ENCODE measurements at regions of chr12 and their contacts with region 1.

Region 1: GRCh38 chr12:92145731-92146496 is at the start of gene BTG1:
- DNase-seq: peak; percentile 100
- ATAC-seq: peak; percentile 76
- H3K4me3 ChIP-seq: peak within 1 kb of the TSS; percentile 94 to 100 (median 96)
- H3K4me3 Mint-ChIP-seq: peak within 1 kb of the TSS; percentile 98
- H3K27ac ChIP-seq: peak within 1 kb of the TSS; percentile 87 to 91
- H3K27ac Mint-ChIP-seq: peak within 1 kb of the TSS; percentile 99
- H3K4me1 ChIP-seq: peaks cover 24 to 27% of the 10 kb centered on the region in 2 donors
- H3K4me1 Mint-ChIP-seq: peaks cover 31% of the 10 kb centered on the region
- H3K27me3 ChIP-seq: no peaks in the 10 kb centered on the region
- H3K27me3 Mint-ChIP-seq: no peaks in the 10 kb centered on the region
- CTCF ChIP-seq: no peak
- total RNA-seq, gene BTG1: 733 and 790 TPM in 2 replicates

Region 2: GRCh38 chr12:91811481-91812287 is 334.2 kb before region 1 on chr12:
- CTCF ChIA-PET with region 1: interaction called, 33 read pairs
- POLR2A ChIA-PET with region 1: no interaction called
- intact Hi-C with region 1: loop called (anchors 2 kb)
- DNase-seq: peak; percentile 80
- ATAC-seq: peak; percentile 71
- H3K4me3 ChIP-seq: no peak overlapping the region
- H3K4me3 Mint-ChIP-seq: no peak overlapping the region
- H3K27ac ChIP-seq: no peak overlapping the region
- H3K27ac Mint-ChIP-seq: peak overlapping the region; percentile 43
- H3K4me1 ChIP-seq: peaks cover 0 to 5% of the 10 kb centered on the region in 2 donors
- H3K4me1 Mint-ChIP-seq: peaks cover 4% of the 10 kb centered on the region
- H3K27me3 ChIP-seq: no peaks in the 10 kb centered on the region
- H3K27me3 Mint-ChIP-seq: no peaks in the 10 kb centered on the region
- CTCF ChIP-seq: peak; percentile 90

Region 3: GRCh38 chr12:92078167-92079053 is 67.5 kb before region 1 on chr12:
- CTCF ChIA-PET with region 1: no interaction called
- POLR2A ChIA-PET with region 1: no interaction called
- intact Hi-C with region 1: no loop called
- DNase-seq: no peak
- ATAC-seq: no peak
- H3K4me3 ChIP-seq: no peak overlapping the region
- H3K4me3 Mint-ChIP-seq: no peak overlapping the region
- H3K27ac ChIP-seq: no peak overlapping the region
- H3K27ac Mint-ChIP-seq: no peak overlapping the region
- H3K4me1 ChIP-seq: peaks cover 17 to 20% of the 10 kb centered on the region in 2 donors
- H3K4me1 Mint-ChIP-seq: peaks cover 45% of the 10 kb centered on the region
- H3K27me3 ChIP-seq: no peaks in the 10 kb centered on the region
- H3K27me3 Mint-ChIP-seq: no peaks in the 10 kb centered on the region
- CTCF ChIP-seq: no peak

Region 4: DNA sequence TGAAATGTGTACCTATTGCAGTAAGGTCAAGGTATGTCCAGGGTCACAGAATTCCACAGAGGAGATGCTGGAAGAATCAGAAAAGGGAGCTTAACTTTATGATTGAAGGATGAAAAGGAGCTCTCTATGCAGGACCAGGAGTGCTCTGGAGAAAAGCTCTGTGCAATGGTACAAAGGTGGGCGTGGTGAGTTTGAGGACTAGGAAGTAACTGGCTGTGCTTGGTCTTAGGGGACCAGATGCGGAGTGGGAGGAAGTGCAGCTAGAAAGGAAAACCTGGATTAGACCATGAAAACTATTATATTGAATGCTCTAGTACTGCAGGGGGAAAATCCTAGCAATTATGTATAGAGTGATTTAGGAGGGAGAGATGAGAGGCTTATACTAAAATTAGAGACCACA is 57.1 kb before region 1 on chr12:
- CTCF ChIA-PET with region 1: no interaction called
- POLR2A ChIA-PET with region 1: no interaction called
- intact Hi-C with region 1: no loop called
- DNase-seq: no peak
- ATAC-seq: no peak
- H3K4me3 ChIP-seq: no peak overlapping the region
- H3K4me3 Mint-ChIP-seq: no peak overlapping the region
- H3K27ac ChIP-seq: no peak overlapping the region
- H3K27ac Mint-ChIP-seq: no peak overlapping the region
- H3K4me1 ChIP-seq: no peaks in the 10 kb centered on the region
- H3K4me1 Mint-ChIP-seq: peaks cover 16% of the 10 kb centered on the region
- H3K27me3 ChIP-seq: no peaks in the 10 kb centered on the region
- H3K27me3 Mint-ChIP-seq: no peaks in the 10 kb centered on the region
- CTCF ChIP-seq: no peak

Region 5: GRCh38 chr12:92158796-92159439 is 13.0 kb after region 1 on chr12:
- CTCF ChIA-PET with region 1: interaction called, 4 read pairs
- POLR2A ChIA-PET with region 1: interaction called, 16 read pairs
- intact Hi-C with region 1: loop called (anchors 1 kb)
- DNase-seq: peak; percentile 67
- ATAC-seq: peak; percentile 69
- H3K4me3 ChIP-seq: peak overlapping the region; percentile 9 to 55 (median 41)
- H3K4me3 Mint-ChIP-seq: peak overlapping the region; percentile 81
- H3K27ac ChIP-seq: peak overlapping the region; percentile 87 to 89
- H3K27ac Mint-ChIP-seq: peak overlapping the region; percentile 88
- H3K4me1 ChIP-seq: peaks cover 79 to 82% of the 10 kb centered on the region in 2 donors
- H3K4me1 Mint-ChIP-seq: peaks cover 87% of the 10 kb centered on the region
- H3K27me3 ChIP-seq: no peaks in the 10 kb centered on the region
- H3K27me3 Mint-ChIP-seq: no peaks in the 10 kb centered on the region
- CTCF ChIP-seq: no peak

Region 6: DNA sequence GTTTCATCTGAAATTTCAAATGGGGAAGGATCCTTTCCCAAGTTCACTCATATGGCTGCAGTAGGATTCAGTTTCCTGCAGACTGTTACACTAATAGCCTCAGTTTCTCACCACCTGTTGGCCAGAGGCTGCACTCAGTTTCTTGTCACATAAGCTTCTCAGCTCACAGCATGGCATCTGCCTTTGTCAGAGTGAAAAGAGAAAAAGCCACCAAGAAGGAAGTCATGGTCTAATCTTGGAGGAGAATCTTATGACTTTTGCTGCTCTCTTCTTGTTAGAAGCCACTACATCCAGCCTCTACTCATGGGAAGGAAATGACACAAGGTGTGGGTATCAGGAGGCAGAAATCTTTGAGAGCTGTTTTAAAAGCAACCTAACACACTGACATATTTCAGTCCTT is 39.1 kb after region 1 on chr12:
- CTCF ChIA-PET with region 1: no interaction called
- POLR2A ChIA-PET with region 1: interaction called, 3 read pairs
- intact Hi-C with region 1: loop called (anchors 5 kb)
- DNase-seq: peak; percentile 43
- ATAC-seq: peak; percentile 37
- H3K4me3 ChIP-seq: peak overlapping the region in 1 of 5 experiments; percentile 31
- H3K4me3 Mint-ChIP-seq: peak overlapping the region; percentile 62
- H3K27ac ChIP-seq: peak overlapping the region; percentile 86 to 97
- H3K27ac Mint-ChIP-seq: peak overlapping the region; percentile 82
- H3K4me1 ChIP-seq: peaks cover 32 to 42% of the 10 kb centered on the region in 2 donors
- H3K4me1 Mint-ChIP-seq: peaks cover 52% of the 10 kb centered on the region
- H3K27me3 ChIP-seq: no peaks in the 10 kb centered on the region
- H3K27me3 Mint-ChIP-seq: no peaks in the 10 kb centered on the region
- CTCF ChIP-seq: no peak

Region 7: GRCh38 chr12:92363295-92364146 is 217.6 kb after region 1 on chr12:
- CTCF ChIA-PET with region 1: interaction called, 17 read pairs
- POLR2A ChIA-PET with region 1: interaction called, 94 read pairs
- intact Hi-C with region 1: loop called (anchors 1 kb)
- DNase-seq: peak; percentile 88
- ATAC-seq: peak; percentile 71
- H3K4me3 ChIP-seq: peak overlapping the region; percentile 12 to 57 (median 54)
- H3K4me3 Mint-ChIP-seq: peak overlapping the region; percentile 92
- H3K27ac ChIP-seq: peak overlapping the region; percentile 95 to 96
- H3K27ac Mint-ChIP-seq: peak overlapping the region; percentile 89
- H3K4me1 ChIP-seq: peaks cover 55 to 57% of the 10 kb centered on the region in 2 donors
- H3K4me1 Mint-ChIP-seq: peaks cover 73% of the 10 kb centered on the region
- H3K27me3 ChIP-seq: no peaks in the 10 kb centered on the region
- H3K27me3 Mint-ChIP-seq: no peaks in the 10 kb centered on the region
- CTCF ChIP-seq: no peak

Region 8: DNA sequence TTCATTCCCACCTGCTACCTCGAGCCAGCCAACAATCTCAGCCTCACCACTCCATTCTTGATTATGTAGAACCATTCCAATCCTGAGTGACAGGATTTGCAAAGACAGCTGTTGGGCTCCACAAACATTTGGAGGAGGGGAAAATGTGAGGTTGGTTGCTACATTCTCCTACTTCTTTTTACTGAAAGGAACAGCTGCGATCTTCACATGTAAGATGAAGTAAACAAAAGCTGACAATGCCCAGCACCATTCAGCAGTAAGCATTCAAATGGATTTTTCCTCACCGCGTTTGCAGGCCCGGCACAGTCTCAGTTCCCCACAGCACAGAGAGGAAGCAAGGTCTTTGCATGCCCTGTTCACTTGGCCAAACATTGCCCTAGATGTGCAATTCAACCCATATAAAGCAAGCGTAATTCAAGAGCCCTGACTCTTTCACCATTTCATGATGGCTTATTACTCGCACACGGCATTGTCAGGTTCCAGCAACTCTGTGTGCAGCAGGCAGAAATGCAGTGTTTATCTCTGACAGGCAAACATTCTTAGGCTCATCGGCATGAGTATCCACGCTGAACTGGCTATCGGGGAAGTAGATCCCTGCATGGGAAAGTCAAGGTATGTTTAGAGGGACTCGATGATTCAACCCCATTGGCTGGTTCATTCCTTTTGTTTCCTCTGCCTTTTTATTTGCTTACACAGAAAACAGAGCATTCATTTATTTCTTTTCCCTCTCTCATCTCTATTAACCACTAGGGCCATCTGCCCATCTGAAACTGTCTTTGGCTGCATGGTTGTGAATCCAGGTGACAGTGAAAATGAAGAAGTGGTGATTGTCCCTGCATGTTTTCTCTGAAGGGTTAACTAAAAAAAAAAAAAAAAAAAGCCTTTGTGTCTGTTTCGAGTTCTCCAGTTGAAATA is 320.7 kb after region 1 on chr12:
- CTCF ChIA-PET with region 1: interaction called, 8 read pairs
- POLR2A ChIA-PET with region 1: interaction called, 22 read pairs
- intact Hi-C with region 1: loop called (anchors 1 kb)
- DNase-seq: peak; percentile 87
- ATAC-seq: peak; percentile 76
- H3K4me3 ChIP-seq: peak overlapping the region; percentile 61 to 93 (median 68)
- H3K4me3 Mint-ChIP-seq: peak overlapping the region; percentile 94
- H3K27ac ChIP-seq: peak overlapping the region; percentile 85 to 93
- H3K27ac Mint-ChIP-seq: peak overlapping the region; percentile 95
- H3K4me1 ChIP-seq: peaks cover 80 to 83% of the 10 kb centered on the region in 2 donors
- H3K4me1 Mint-ChIP-seq: peaks cover 81% of the 10 kb centered on the region
- H3K27me3 ChIP-seq: no peaks in the 10 kb centered on the region
- H3K27me3 Mint-ChIP-seq: no peaks in the 10 kb centered on the region
- CTCF ChIP-seq: no peak

Region 9: DNA sequence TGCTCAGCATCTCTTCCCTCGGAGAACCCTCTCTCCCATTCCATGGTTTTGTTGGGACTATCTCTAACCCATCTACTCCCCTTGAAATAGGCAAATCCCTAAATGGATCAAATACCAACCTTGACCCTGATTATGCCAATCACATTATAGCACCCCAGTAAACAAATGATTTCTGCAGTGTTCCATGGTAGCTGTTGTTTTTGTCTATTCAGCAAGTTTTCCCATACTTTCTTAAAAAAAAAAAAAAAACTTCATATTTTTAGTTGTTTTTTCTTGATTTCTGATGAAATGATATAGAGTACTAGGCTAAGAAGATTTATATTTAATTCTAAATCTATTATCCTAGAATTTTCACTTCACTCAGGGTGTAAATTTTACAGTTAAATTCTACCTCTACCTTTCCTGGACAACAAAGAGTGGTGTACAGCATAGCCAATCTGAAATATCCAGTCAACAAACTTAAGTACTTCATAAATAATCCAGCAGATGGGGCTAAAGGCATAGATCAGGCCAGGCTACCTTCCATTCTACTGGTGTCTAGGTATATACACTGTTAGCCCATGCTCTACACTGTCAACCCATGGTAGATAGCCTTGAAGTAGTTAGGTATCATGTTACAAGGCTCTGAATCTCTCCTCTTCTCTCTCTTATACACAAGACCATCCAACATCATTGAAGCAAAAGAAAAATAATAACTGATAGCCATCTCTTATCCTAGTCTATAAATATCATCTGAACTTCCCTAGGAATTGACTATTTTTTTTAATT is 639.1 kb after region 1 on chr12:
- CTCF ChIA-PET with region 1: no interaction called
- POLR2A ChIA-PET with region 1: no interaction called
- intact Hi-C with region 1: no loop called
- DNase-seq: peak; percentile 75
- ATAC-seq: peak; percentile 98
- H3K4me3 ChIP-seq: no peak overlapping the region
- H3K4me3 Mint-ChIP-seq: no peak overlapping the region
- H3K27ac ChIP-seq: no peak overlapping the region
- H3K27ac Mint-ChIP-seq: no peak overlapping the region
- H3K4me1 ChIP-seq: no peaks in the 10 kb centered on the region
- H3K4me1 Mint-ChIP-seq: no peaks in the 10 kb centered on the region
- H3K27me3 ChIP-seq: no peaks in the 10 kb centered on the region
- H3K27me3 Mint-ChIP-seq: no peaks in the 10 kb centered on the region
- CTCF ChIP-seq: peak; percentile 81